GM12878 (cell line): ENCODE measurements at regions of chr10 and their contacts with region 1.

Region 1: DNA sequence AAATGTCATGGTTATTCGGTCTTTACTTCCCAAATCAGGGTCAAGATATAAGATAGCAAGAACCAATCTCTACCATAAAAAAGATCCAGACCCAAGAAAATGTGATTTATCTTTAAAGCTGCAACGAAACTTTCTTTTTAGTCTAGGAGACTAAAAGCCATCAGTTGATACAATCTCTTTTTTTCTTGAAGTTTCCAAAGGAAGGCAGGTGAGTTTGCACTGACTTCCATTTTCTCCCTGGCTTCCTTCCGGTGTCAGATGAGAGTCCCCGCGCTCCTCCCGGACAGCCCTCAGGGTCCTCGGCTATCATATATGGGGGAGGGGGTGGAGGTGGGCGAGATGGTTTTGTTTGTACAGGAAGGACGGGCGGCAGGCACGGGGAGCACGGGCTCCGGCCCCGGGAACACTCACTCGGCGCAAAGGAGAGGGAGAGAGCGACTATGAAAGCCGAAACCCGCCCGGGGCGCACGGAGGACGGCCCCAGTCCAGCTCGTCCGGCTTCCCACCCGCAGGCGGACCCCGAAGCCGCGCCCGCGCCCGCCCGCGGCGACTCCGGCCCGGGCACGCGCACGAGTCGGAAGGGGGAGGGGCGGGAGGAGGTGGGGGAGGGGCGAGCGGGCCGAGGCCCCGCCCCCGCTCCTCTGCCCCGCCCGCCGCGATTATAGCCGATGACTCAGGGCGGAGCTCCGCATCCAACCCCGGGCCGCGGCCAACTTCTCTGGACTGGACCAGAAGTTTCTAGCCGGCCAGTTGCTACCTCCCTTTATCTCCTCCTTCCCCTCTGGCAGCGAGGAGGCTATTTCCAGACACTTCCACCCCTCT is at the start of gene BAG3:
- DNase-seq: no peak
- ATAC-seq: peak; percentile 84
- H3K4me3 ChIP-seq: peak within 1 kb of the TSS; percentile 90
- H3K27ac ChIP-seq: peak within 1 kb of the TSS; percentile 67
- H3K4me1 ChIP-seq: no peaks in the 10 kb centered on the region
- H3K27me3 ChIP-seq: no peaks in the 10 kb centered on the region
- CTCF ChIP-seq: no peak
- EP300 ChIP-seq: no peak
- POLR2A ChIP-seq: peak; percentile 86
- RAD21 ChIP-seq: no peak
- polyA plus RNA-seq, gene BAG3: 1.8 to 2.7 TPM

Region 2: GRCh38 chr10:119596537-119597404 is 54.1 kb before region 1 on chr10 and contains the start of gene TIAL1:
- CTCF ChIA-PET with region 1: interaction called, 6 read pairs
- POLR2A ChIA-PET with region 1: interaction called, 4 read pairs
- RAD21 ChIA-PET with region 1: no interaction called
- SMC1A ChIA-PET with region 1: interaction called, 3 read pairs
- in situ Hi-C with region 1: no loop called
- intact Hi-C with region 1: loop called (anchors 1 kb)
- DNase-seq: peak; percentile 98
- ATAC-seq: peak; percentile 86
- H3K4me3 ChIP-seq: peak within 1 kb of the TSS; percentile 83
- H3K27ac ChIP-seq: peak within 1 kb of the TSS; percentile 97
- H3K4me1 ChIP-seq: peaks cover 7% of the 10 kb centered on the region; the same call in 1 of the 2 replicates
- H3K27me3 ChIP-seq: no peaks in the 10 kb centered on the region
- CTCF ChIP-seq: no peak
- EP300 ChIP-seq: no peak
- POLR2A ChIP-seq: peak; percentile 81
- RAD21 ChIP-seq: no peak
- polyA plus RNA-seq, gene TIAL1: 26.0 to 68.2 TPM